Activated B cell treated with CpG ODN at 0.5 μM for 24 hours (primary cell): ENCODE measurements at regions of chr7 and their contacts with region 1.

Region 1: GRCh38 chr7:4744391-4745264 is 30.8 kb upstream of the AP5Z1 start:
- DNase-seq: peak; percentile 67
- ATAC-seq: peak; percentile 82
- H3K4me3 Mint-ChIP-seq: peak overlapping the region; percentile 81
- H3K27ac Mint-ChIP-seq: peak overlapping the region; percentile 92
- H3K4me1 Mint-ChIP-seq: peaks cover 58% of the 10 kb centered on the region
- H3K27me3 Mint-ChIP-seq: no peaks in the 10 kb centered on the region
- CTCF ChIP-seq: no peak

Region 2: GRCh38 chr7:3950249-3950648 is 794.4 kb before region 1 on chr7:
- CTCF ChIA-PET with region 1: no interaction called
- POLR2A ChIA-PET with region 1: no interaction called
- intact Hi-C with region 1: no loop called
- DNase-seq: no peak
- ATAC-seq: peak; percentile 40
- H3K4me3 Mint-ChIP-seq: no peak overlapping the region
- H3K27ac Mint-ChIP-seq: no peak overlapping the region
- H3K4me1 Mint-ChIP-seq: peaks cover 11% of the 10 kb centered on the region
- H3K27me3 Mint-ChIP-seq: peaks cover 2% of the 10 kb centered on the region
- CTCF ChIP-seq: no peak

Region 3: GRCh38 chr7:4665661-4666060 is 79.0 kb before region 1 on chr7:
- CTCF ChIA-PET with region 1: no interaction called
- POLR2A ChIA-PET with region 1: no interaction called
- intact Hi-C with region 1: no loop called
- DNase-seq: no peak
- ATAC-seq: no peak
- H3K4me3 Mint-ChIP-seq: no peak overlapping the region
- H3K27ac Mint-ChIP-seq: no peak overlapping the region
- H3K4me1 Mint-ChIP-seq: no peaks in the 10 kb centered on the region
- H3K27me3 Mint-ChIP-seq: peaks cover 3% of the 10 kb centered on the region
- CTCF ChIP-seq: no peak

Region 4: DNA sequence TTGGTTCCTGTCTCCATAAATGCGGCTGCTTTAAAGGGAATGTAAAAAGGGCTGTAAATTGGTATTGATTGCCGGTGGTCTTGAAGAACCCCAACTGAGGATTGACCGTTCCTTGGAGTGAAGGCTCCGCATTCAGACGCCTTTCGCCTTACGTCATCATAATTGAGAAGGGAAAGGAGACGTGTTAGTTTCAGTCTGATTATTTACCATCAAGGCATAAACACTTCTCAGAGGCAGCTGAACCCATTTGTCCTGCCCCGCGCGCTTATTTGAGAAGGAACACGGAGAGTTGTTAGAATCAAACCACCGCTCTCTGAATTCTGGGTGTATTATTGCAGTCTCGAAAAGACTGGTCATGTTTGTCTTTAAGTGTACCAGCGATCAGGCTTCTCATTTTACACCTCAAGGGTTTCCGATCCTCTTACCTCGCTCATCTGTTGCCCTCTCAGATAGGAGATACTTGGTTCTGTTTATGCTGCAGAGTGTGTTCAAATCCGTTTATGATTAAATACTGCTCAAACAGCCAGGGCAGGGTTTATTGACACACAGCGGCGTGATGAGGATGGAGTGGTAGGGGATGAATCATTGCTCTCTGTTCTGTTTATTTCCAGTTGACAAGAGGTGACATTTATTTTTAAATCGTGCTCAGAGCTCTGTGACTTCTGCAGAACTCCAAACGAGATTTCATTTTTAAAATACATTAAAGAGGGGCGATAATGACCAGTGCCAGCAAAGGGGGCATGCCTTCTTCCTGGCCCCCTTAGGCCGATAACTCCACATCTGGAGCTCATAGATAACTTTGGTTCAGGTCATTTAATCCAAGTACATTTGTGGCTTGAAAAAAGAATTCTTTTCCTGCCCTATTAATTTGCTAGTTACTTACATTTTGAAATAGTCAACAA is 32.1 kb before region 1 on chr7:
- CTCF ChIA-PET with region 1: no interaction called
- POLR2A ChIA-PET with region 1: interaction called, 9 read pairs
- intact Hi-C with region 1: loop called (anchors 2 kb)
- DNase-seq: no peak
- ATAC-seq: peak; percentile 78
- H3K4me3 Mint-ChIP-seq: peak overlapping the region; percentile 75
- H3K27ac Mint-ChIP-seq: peak overlapping the region; percentile 73
- H3K4me1 Mint-ChIP-seq: peaks cover 50% of the 10 kb centered on the region
- H3K27me3 Mint-ChIP-seq: no peaks in the 10 kb centered on the region
- CTCF ChIP-seq: no peak